Ascending aorta (tissue), 2 donors: ENCODE measurements at regions of chr19 and their contacts with region 1.

Region 1: DNA sequence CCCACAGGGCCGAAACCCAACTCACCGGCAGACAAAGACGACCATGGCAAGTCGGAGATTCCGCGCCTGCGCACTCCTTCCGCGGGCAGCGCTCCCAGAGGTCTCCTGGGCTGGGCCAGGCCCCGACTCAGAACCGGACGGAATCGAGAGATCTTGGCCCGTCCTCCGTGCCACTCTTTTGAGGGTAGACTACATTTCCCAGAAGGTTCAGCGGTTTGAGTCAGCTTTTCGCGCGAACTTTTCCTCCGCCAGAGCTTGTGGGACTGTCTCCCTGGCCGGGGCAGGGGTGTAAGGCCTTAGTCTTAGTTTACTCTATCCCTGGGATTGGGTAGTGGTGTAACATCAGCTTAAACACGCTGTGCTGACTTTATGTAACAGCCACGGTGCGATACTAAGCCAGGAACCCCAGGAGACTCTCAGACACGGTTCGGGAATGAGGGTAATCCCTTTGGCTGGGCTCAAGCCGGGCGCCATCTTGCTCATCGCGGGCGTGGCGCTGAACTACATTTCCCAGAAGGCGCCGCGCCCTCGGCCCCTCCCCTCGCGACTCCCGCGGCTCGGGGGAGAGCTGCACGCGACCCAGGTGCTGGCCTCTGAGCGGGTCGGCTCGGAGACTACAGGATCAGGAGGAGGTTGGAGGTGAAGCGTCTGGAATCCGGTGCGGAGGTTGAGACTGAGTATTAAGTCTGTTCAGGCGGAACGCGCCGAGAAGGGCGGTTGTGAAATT is at the start of gene ZNF260:
- DNase-seq: peak; percentile 86 to 98
- H3K4me3 ChIP-seq: peak within 1 kb of the TSS; percentile 73 to 92
- H3K27ac ChIP-seq: peak within 1 kb of the TSS; percentile 89 to 92
- H3K4me1 ChIP-seq: peaks cover 0 to 4% of the 10 kb centered on the region in 2 donors
- H3K27me3 ChIP-seq: no peaks in the 10 kb centered on the region
- CTCF ChIP-seq: no peak
- total RNA-seq, gene ZNF260: 2.1 TPM

Region 2: GRCh38 chr19:36418287-36419001 is 109.9 kb before region 1 on chr19 and contains the start of gene ZFP82:
- intact Hi-C with region 1: loop called (anchors 5 kb)
- DNase-seq: peak; percentile 12 to 78
- H3K4me3 ChIP-seq: peak within 1 kb of the TSS; percentile 61 to 77
- H3K27ac ChIP-seq: peak within 1 kb of the TSS; percentile 76 to 84
- H3K4me1 ChIP-seq: peaks cover 0 to 7% of the 10 kb centered on the region in 2 donors
- H3K27me3 ChIP-seq: no peaks in the 10 kb centered on the region
- CTCF ChIP-seq: no peak
- total RNA-seq, gene ZFP82: 1.3 TPM

Region 3: DNA sequence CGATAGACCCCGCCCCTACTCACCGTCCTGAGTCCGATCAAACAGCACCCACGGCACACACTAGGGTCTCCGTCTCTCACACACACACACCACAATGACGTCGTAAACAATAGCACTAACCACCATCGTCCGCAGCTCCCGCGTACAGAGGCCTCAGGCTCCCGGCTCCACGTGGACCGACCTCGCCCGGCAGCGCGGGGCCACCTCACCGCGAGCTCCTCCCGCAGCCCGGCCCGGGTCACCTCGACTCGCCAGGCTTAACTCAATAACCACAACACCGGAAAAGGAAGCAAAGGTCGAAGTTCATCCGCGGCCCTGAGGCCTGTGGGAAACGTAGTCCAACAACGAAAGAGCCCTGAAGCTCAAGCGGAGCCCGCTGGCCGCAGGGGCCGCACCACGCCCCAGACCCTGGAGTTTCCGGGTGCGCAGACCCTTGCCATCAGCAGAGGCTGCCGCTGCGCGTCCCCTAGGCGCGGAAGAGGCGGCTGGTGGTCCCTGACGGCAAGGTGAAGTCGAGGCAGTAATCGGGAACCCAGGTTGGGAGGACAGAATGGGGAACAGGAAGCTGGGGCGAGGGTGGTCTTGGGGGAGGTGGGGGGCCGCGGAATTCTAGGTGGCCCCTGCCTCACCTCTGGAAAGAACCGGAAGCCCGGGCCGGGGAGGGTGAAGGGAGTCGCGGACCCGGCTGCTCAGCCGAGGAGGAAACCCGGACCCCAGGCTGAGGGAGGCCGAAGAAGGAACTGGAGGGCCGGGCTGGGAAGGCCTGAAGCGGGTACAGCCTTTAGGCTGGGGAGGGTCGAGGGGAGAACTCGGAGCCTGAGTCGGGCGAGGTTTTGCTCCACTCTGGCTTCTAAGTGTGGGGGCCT is 44.9 kb after region 1 on chr19 and contains the start of gene ZNF529:
- intact Hi-C with region 1: loop called (anchors 1 kb)
- DNase-seq: peak; percentile 66 to 95
- H3K4me3 ChIP-seq: peak within 1 kb of the TSS; percentile 79 to 82
- H3K27ac ChIP-seq: peak within 1 kb of the TSS; percentile 83 to 88
- H3K4me1 ChIP-seq: peaks cover 3 to 9% of the 10 kb centered on the region in 2 donors
- H3K27me3 ChIP-seq: no peaks in the 10 kb centered on the region
- CTCF ChIP-seq: no peak
- total RNA-seq, gene ZNF529: 3.8 TPM

Region 4: DNA sequence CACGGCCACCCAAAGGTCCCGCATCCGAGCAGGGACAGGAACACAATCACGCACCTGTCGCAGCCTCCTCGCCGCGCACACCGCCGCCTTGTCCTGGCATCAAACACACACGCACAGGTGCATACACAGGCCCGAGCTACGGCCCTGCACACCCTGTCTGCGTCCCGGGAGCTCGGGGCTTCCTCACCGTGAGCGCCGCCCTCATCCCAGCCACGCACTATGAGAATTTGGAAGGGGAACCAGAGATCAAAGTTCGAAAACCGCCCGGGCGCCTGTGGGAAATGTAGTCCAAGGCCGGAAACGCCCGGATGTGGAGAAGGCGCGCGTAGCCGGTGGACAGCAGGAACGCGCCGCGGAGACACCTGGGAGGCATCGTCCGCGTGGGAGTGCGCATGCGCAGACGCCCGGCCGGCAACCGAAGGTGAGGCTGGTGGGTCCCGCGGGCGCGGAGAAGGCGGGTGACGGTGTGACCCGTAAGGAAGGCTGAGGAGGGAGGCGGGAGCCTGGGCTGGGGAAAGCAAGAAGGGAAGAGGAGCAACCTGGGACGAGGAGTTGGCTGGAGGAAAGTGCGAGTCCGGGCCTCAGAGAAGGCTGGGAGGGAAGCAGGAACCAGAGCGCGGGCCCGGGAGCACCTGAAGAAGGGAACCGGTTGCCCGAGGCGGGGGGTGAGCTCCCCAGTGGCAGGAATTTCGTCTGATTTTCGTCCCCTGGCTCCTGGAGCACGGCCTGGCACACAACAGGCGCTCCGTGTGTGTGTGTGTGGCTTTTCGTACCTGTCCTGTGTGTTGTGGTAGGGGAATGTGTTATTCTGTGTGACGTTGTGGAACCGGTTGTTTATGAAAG is 159.1 kb after region 1 on chr19 and contains the start of gene ZNF567:
- intact Hi-C with region 1: loop called (anchors 1 kb)
- DNase-seq: peak; percentile 88 to 98
- H3K4me3 ChIP-seq: peak within 1 kb of the TSS; percentile 68 to 75
- H3K27ac ChIP-seq: peak within 1 kb of the TSS; percentile 39 to 66
- H3K4me1 ChIP-seq: peaks cover 0 to 6% of the 10 kb centered on the region in 2 donors
- H3K27me3 ChIP-seq: no peaks in the 10 kb centered on the region
- CTCF ChIP-seq: no peak
- total RNA-seq, gene ZNF567: 3.7 TPM

Region 5: DNA sequence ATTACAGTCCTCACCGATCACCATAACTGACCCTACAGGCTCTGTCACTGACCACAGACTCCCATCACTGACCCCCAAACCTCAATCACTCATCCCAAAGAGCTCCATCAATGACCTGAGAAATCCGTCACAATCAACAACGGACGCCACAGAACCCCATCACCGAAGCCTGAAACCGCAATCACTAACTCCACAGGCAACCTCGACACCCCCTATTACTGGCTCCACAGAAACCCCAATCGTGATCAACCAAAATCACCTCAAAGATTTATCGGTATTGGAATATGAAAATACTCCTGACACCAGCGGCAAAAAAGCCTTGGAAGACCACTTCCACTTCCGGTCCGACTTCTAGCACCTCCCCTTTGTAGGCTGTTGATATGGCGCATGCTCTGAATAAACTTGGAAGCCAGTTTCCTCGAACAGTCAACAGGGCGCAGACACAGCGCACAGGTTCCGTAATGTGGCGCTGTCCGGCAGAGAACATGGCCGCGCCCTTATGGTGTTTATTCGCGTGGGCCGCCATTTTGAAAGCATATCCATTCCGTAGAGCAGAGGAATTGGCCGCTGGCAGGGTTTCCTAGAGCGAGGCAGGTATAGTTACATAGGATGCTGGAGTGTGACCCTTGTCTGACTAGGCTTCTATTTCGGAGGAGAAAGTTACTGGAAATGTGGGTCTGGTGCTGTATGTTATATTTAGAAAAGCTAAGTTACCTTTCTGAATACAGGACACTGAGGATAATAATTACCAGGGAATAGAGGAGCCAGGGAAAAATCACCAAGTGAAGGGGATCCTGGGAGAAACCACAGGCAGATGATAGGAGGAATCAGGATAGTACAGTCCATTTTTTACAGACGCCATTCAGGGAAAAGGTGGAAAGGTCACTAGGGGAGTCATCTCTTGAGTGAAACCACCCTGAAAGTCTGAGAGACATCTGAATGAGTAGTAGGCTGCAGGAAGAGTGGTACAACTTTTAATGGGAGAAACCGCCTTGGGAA is 644.3 kb after region 1 on chr19 and contains the start of gene ZNF585A:
- intact Hi-C with region 1: loop called (anchors 10 kb)
- DNase-seq: peak; percentile 85 to 97
- H3K4me3 ChIP-seq: peak within 1 kb of the TSS; percentile 59 to 65
- H3K27ac ChIP-seq: peak within 1 kb of the TSS; percentile 62 to 68
- H3K4me1 ChIP-seq: no peaks in the 10 kb centered on the region
- H3K27me3 ChIP-seq: no peaks in the 10 kb centered on the region
- CTCF ChIP-seq: peak in 1 of 3 experiments; percentile 35
- total RNA-seq, gene ZNF585A: 8.4 TPM